ENCODE measurements at regions of chr15 and their contacts with region 1.

Region 1: GRCh38 chr15:88274553-88275460 is 18.3 kb upstream of the NTRK3 start:
- H3K4me3 ChIP-seq: no peak overlapping the region
- H3K27ac ChIP-seq: no peak overlapping the region
- H3K4me1 ChIP-seq: no peaks in the 10 kb centered on the region
- CTCF ChIP-seq: peak; percentile 66

Region 2: DNA sequence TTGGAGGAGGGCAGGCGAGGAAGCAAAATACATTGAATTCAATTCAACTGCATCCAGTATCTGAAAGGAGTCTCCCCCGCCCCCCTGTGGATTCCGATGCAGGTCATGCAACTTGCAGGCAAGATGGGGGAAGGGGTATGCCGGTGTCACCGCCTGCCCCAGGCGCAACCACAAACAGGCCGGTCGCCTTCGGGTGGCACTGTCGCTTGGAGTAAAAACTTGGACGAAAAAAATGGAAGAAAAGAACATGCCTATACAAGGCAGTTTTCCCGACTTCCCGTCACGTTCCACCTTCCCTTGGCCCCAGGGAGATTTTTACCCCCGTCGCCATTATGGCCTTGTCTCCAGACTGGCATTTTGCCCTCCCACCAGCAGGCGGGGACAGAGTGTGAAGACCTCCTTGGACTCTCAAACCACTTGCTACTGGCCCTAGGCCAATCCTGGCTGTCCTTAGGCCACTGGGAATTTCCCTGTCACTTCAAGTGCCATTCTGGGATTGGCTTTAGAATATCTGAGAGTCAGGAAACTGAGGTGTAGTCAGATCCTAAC is 16.6 kb before region 1 on chr15:
- CTCF ChIA-PET with region 1: interaction called, 29 read pairs
- POLR2A ChIA-PET with region 1: no interaction called
- H3K4me3 ChIP-seq: no peak overlapping the region
- H3K27ac ChIP-seq: no peak overlapping the region
- H3K4me1 ChIP-seq: no peaks in the 10 kb centered on the region; the same call in 1 of the 2 replicates
- CTCF ChIP-seq: no peak

Region 3: DNA sequence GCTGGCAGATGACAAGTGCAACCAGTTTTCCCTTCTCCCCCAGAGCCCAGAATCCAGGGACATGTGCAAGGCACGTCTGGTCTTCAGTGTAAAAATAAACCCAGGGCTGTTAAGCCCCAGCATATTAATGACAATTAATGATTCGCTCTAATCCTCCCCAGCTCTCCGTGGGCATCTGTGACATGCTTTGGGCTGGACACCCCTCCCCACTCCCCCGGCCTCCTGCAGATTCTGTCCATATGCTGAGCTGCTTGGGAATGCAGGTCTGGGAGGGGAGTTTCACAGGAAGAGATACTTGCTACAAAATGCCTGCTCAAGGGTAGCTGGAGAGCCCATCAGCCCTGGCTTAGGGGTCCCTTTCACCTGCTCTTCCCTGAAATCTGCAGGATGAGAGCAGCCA is 24.7 kb after region 1 on chr15:
- CTCF ChIA-PET with region 1: interaction called, 17 read pairs
- POLR2A ChIA-PET with region 1: no interaction called
- H3K4me3 ChIP-seq: no peak overlapping the region
- H3K27ac ChIP-seq: no peak overlapping the region
- H3K4me1 ChIP-seq: no peaks in the 10 kb centered on the region
- CTCF ChIP-seq: no peak